Mammary epithelial cell (primary cell): ENCODE measurements at regions of chr14 and their contacts with region 1.

Region 1: GRCh38 chr14:103099081-103099732 is 4.7 kb downstream of the EXOC3L4 start:
- DNase-seq: no peak
- H3K4me3 ChIP-seq: no peak overlapping the region
- H3K27ac ChIP-seq: no peak overlapping the region
- H3K4me1 ChIP-seq: peaks cover 7% of the 10 kb centered on the region
- H3K27me3 ChIP-seq: peaks cover 24% of the 10 kb centered on the region
- CTCF ChIP-seq: no peak

Region 2: DNA sequence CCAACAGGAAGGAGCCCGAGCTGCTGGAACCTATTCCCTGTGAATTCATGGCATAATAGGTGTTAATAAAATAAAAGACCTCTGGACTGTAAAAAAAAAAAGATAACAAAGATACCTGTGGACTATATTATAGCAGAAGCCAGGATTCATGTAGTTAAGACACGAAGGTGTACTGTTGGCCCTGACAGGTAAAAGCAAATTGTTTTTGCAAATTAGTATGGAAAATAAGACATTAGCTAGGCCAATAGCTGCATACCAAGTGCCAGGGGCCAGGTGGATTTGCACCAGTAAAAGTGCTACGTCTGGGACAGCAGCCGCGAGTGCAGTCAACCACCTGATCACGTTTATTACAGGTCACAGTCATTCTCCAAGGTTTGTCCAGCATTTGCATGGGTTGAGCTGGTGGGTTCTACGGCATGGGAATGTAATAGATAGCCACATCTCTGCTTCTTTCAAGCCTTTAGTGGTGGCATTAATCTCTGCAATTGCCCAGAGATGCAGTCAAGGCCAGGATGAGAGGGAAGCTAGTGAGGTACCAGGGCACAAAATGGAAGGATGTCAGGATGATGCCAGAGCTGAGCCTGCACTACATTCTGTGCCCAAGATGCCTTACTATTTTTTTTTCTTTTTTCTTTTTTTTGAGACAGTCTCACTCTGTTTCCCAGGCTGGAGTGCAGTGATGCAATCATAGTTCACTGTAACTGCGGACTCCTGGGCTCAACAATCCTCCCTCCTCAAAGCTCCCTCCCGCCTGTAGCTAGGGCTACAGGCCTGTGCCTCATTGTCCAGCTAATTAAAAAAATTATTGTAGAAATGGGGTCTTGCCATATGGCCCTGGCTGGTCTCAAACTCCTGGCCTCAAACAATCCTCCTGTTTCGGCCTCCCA is 50.4 kb after region 1 on chr14:
- CTCF ChIA-PET with region 1: no interaction called
- dilution Hi-C with region 1: loop called (anchors 5 kb)
- in situ Hi-C with region 1: no loop called
- intact Hi-C with region 1: no loop called
- DNase-seq: no peak
- H3K4me3 ChIP-seq: no peak overlapping the region
- H3K27ac ChIP-seq: no peak overlapping the region
- H3K4me1 ChIP-seq: peaks cover 6% of the 10 kb centered on the region
- H3K27me3 ChIP-seq: peaks cover 2% of the 10 kb centered on the region
- CTCF ChIP-seq: no peak

Region 3: GRCh38 chr14:103314496-103315277 is 215.5 kb after region 1 on chr14:
- CTCF ChIA-PET with region 1: no interaction called
- dilution Hi-C with region 1: loop called (anchors 5 kb)
- in situ Hi-C with region 1: no loop called
- intact Hi-C with region 1: no loop called
- DNase-seq: no peak
- H3K4me3 ChIP-seq: no peak overlapping the region
- H3K27ac ChIP-seq: no peak overlapping the region
- H3K4me1 ChIP-seq: no peaks in the 10 kb centered on the region
- H3K27me3 ChIP-seq: no peaks in the 10 kb centered on the region
- CTCF ChIP-seq: no peak